ENCODE measurements at regions of chr7 and their contacts with region 1.

Region 1: GRCh38 chr7:140230861-140231770 is 54.3 kb upstream of the KDM7A start:
- DNase-seq: no peak
- H3K4me3 ChIP-seq: peak overlapping the region; percentile 48 to 73 (median 60)
- H3K27ac ChIP-seq: peak overlapping the region in 3 of 4 donors; percentile 20 to 38 (median 20)
- H3K4me1 ChIP-seq: peaks cover 8 to 26% (median 26%) of the 10 kb centered on the region in 4 donors
- H3K27me3 ChIP-seq: peaks cover 0 to 16% (median 2%) of the 10 kb centered on the region in 4 donors
- CTCF ChIP-seq: no peak
- EP300 ChIP-seq: no peak
- POLR2A ChIP-seq: no peak

Region 2: GRCh38 chr7:140136073-140136472 is 95.0 kb before region 1 on chr7:
- intact Hi-C with region 1: no loop called
- DNase-seq: no peak
- H3K4me3 ChIP-seq: no peak overlapping the region
- H3K27ac ChIP-seq: no peak overlapping the region
- H3K4me1 ChIP-seq: no peaks in the 10 kb centered on the region
- H3K27me3 ChIP-seq: no peaks in the 10 kb centered on the region
- CTCF ChIP-seq: no peak
- EP300 ChIP-seq: no peak
- POLR2A ChIP-seq: no peak

Region 3: DNA sequence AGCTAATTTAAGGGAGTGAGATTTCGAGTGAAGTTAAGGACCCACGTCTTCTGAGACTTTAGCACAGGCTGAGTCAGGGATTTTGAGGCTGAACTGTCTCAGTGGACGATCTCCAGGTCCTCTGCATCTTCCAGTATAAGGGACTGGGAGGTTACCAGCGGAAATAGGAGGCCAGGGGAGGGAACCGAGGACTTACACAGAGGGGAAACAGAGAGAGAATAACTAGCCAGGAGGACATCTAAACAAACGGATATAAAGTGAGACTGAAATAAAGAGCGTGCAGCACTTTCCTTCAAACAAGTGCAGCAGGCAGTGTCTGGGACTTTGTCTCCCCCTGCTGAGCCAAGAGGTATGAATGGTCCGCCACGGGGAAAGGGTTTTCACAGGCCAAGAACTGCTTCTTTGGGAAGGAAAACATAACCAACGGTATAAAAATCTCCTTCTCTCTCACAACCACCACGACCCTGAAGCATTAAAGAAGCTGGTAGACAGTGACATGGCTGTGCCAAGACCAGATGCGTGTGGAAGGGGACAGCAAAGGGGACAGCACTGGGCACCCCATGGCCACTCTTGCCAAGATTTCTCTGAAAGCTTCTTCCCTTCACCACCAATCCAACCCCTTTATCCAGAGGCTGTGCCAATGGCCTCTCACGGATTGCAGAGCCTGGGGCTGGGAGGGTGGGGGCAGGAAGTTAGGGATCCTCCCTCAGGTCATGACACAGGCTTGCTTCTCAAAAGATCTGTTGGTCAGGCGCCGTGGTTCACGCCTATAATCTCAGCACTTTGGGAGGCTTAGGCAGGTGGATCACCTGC is 95.2 kb after region 1 on chr7:
- intact Hi-C with region 1: loop called (anchors 5 kb)
- DNase-seq: no peak
- H3K4me3 ChIP-seq: peak overlapping the region; percentile 12 to 32 (median 24)
- H3K27ac ChIP-seq: peak overlapping the region; percentile 45 to 56 (median 46)
- H3K4me1 ChIP-seq: peaks cover 4 to 16% (median 13%) of the 10 kb centered on the region in 4 donors
- H3K27me3 ChIP-seq: no peaks in the 10 kb centered on the region
- CTCF ChIP-seq: peak; percentile 67 to 78 (median 72)
- EP300 ChIP-seq: no peak
- POLR2A ChIP-seq: no peak

Region 4: GRCh38 chr7:140673063-140673773 is 442.1 kb after region 1 on chr7:
- intact Hi-C with region 1: no loop called
- DNase-seq: no peak
- H3K4me3 ChIP-seq: peak overlapping the region; percentile 75 to 93 (median 78)
- H3K27ac ChIP-seq: peak overlapping the region; percentile 84 to 91 (median 88)
- H3K4me1 ChIP-seq: peaks cover 28 to 48% (median 40%) of the 10 kb centered on the region in 4 donors
- H3K27me3 ChIP-seq: no peaks in the 10 kb centered on the region
- CTCF ChIP-seq: no peak
- EP300 ChIP-seq: no peak
- POLR2A ChIP-seq: no peak

Measured in esophagus muscularis mucosa (tissue), 4 donors.